Activated CD4-positive, alpha-beta memory T cell treated with anti-CD3 and anti-CD28 coated beads for 36 hours (primary cell): ENCODE measurements at regions of chr11 and their contacts with region 1.

Region 1: DNA sequence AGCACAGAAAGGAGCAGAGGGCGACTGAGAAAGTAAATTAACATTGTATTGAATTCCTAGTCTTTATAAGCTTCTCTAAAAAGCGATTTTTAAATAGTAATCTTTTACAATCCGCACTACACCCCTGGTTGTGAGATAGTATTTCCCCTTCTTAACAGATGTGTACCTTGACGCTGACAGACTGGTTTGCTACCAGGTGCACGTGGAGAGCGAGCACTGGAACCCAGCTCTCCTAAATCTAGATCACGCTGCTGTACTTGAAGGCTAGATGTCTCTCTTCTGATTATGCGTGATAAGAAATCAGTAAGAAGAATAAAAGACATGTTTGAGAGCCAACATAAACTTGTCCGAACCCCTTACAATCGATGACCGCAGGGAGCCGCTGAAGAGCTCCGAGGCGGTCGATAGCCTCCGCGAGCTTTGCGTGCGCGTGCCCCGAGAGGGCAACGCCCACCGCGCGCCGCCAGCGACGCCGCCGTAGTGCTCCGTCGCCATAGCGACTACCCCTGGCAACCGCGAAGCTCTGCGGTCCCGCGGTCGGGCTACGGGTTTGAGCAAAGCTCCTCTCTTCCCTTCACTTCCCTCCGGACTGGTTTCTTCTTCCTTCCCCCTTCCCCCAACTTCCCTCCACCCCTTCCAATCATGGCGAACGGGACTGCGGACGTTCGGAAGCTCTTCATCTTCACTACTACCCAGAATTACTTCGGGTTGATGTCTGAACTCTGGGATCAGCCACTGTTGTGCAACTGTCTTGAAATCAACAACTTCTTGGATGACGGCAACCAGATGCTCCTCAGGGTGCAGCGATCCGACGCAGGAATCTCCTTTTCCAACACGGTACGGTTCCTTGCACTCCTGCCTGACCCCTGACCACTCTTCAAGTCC is at the start of gene DYNC2H1:
- DNase-seq: peak; percentile 93
- H3K4me3 Mint-ChIP-seq: peak within 1 kb of the TSS; percentile 98
- H3K27ac Mint-ChIP-seq: peak within 1 kb of the TSS; percentile 58
- H3K4me1 Mint-ChIP-seq: peaks cover 5% of the 10 kb centered on the region
- H3K27me3 Mint-ChIP-seq: peaks cover 6% of the 10 kb centered on the region
- total RNA-seq, gene DYNC2H1: 1.4 to 1.7 TPM

Region 2: GRCh38 chr11:102317099-102317767 is 791.9 kb before region 1 on chr11 and contains the start of gene BIRC3:
- CTCF ChIA-PET with region 1: no interaction called
- POLR2A ChIA-PET with region 1: no interaction called
- intact Hi-C with region 1: loop called (anchors 1 kb)
- DNase-seq: peak; percentile 96
- H3K4me3 Mint-ChIP-seq: peak within 1 kb of the TSS; percentile 95
- H3K27ac Mint-ChIP-seq: peak within 1 kb of the TSS; percentile 100
- H3K4me1 Mint-ChIP-seq: peaks cover 56% of the 10 kb centered on the region
- H3K27me3 Mint-ChIP-seq: no peaks in the 10 kb centered on the region
- total RNA-seq, gene BIRC3: 135 to 139 TPM

Region 3: DNA sequence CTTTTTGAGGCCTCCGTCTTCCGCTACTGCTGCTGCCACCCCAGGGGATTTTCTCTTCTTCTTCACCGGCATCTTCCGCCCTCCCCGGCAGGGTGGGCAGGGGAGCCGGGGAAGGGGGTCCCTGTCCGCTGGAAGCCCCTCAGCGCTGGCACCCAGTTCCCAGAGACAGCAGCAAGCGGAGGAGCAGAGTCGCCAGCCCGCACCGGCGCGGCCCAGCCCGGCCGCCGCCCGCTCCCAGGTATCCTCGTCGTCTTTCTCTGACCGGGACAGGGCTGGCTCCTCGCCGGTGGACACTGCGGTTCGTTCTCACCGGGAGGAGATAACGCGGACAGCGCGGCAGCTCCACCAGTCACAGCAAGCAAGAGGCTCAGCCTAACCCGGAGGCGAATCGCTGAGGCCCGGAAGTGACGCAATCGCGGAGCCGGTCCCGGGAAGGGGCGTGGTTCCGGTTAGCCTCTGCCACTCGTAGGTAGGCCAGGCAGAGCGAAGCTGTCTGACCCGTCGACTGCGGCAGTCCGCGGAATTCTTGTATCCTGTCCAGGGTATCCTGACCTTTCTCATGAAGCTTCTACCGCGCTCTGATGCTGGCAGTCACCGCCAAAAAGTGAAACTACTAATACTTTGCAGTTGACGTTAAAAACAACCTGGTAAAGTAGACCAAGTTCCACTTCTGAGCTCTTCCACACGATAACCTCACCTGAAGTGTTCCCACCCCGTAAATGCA is 17.2 kb before region 1 on chr11 and contains the start of gene DCUN1D5:
- CTCF ChIA-PET with region 1: interaction called, 57 read pairs
- POLR2A ChIA-PET with region 1: interaction called, 28 read pairs
- intact Hi-C with region 1: loop called (anchors 1 kb)
- DNase-seq: peak; percentile 98
- H3K4me3 Mint-ChIP-seq: peak within 1 kb of the TSS; percentile 89
- H3K27ac Mint-ChIP-seq: peak within 1 kb of the TSS; percentile 88
- H3K4me1 Mint-ChIP-seq: peaks cover 25% of the 10 kb centered on the region
- H3K27me3 Mint-ChIP-seq: peaks cover 16% of the 10 kb centered on the region
- total RNA-seq, gene DCUN1D5: 60.1 to 61.0 TPM

Region 4: DNA sequence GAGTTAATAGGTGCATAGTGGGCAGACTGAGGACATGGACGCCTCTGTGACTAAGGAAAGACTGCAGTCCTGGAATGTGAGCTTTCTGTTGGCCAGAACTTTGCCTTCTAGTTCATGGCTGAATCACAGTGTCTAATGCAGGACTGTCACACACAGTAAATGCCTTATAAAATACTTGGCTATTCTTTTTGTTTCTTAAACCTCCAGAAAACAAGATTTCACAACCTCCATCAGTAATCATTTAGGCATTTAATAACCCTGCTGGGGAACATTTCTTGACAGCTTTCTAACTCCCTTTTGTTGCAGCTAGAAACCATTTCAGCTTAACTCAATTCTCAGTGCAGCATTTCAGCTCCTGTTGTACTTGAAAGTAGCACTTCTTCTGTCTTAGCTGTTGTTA is 591.4 kb after region 1 on chr11:
- CTCF ChIA-PET with region 1: no interaction called
- POLR2A ChIA-PET with region 1: no interaction called
- intact Hi-C with region 1: no loop called
- DNase-seq: no peak
- H3K4me3 Mint-ChIP-seq: no peak overlapping the region
- H3K27ac Mint-ChIP-seq: no peak overlapping the region
- H3K4me1 Mint-ChIP-seq: no peaks in the 10 kb centered on the region
- H3K27me3 Mint-ChIP-seq: no peaks in the 10 kb centered on the region